Activated CD8-positive, alpha-beta T cell treated with anti-CD3 and anti-CD28 coated beads for 36 hours (primary cell): ENCODE measurements at regions of chr9 and their contacts with region 1.

Region 1: DNA sequence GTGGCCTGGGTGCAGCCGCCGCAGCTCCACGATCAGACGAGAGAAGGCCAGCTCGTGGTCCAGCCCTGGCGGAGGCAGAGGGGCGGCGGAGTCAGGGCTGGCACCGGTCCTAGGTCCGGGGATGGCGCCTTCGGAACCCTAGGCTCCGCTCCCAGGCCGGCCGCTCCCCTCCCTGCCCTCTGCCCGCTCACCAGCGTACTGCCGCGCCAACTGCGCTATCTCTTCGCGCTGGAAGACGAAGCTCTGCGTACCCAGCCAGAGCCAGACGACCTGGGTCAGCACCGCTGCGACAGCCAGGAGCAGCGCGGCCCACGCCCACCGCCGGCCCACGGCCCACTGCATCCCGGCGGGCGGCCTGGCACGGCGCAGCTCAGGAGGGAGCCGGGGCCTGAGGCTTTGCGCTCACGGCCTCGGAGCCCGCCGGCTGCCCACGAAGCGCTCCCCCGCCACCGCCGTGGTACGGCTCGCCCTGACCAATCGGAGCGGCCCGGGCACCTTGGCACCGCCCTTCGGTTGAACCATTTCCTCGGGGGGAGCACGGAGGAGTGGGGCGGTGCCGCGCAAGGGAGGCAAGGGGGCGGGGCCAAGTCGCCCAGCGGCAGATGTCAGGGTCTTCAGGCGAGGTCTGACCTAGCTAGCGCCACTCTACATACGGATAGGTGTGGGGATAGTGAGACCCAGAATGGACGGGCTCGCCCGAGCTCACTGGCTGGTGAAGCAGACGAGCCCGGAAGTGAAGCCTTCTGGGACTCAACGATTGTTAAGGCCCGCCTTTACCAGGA is at the start of gene SIGMAR1:
- DNase-seq: peak; percentile 92
- ATAC-seq: peak; percentile 95
- H3K4me3 Mint-ChIP-seq: peak within 1 kb of the TSS; percentile 94
- H3K27ac Mint-ChIP-seq: peak within 1 kb of the TSS; percentile 90
- H3K4me1 Mint-ChIP-seq: peaks cover 36% of the 10 kb centered on the region
- H3K27me3 Mint-ChIP-seq: no peaks in the 10 kb centered on the region
- CTCF ChIP-seq: no peak
- total RNA-seq, gene SIGMAR1: 80.7 to 81.2 TPM

Region 2: DNA sequence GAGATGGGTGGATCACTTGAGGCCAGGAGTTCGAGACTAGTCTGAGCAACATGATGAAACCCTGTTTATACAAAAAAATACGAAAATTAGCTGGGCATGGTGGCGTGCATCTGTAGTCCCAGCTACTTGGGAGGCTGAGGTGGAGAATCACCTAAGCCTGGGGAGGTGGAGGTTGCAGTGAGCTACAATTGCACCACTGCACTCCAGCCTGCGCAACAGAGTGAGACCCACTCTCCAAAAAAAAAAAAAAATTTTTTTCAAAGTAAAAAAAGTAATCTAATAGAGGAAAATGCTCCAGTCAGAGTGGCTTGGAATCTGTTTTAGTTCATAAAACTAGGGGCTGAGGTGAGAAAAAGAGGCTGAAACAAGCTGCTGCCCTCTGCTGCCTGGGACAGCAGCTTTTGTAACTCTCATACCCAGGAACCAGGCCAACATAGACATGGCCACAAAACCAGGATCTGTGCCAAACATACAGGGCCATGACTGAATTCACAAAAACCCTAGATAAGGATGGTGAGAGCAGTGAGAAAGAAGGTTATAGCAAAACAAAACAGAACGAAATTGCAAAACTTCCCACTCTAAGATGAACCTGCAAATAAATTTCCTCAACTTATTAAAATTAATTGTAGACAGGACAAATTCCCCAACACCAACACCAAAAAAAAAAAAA is 497.9 kb before region 1 on chr9:
- CTCF ChIA-PET with region 1: no interaction called
- POLR2A ChIA-PET with region 1: no interaction called
- intact Hi-C with region 1: no loop called
- DNase-seq: peak; percentile 4
- ATAC-seq: no peak
- H3K4me3 Mint-ChIP-seq: no peak overlapping the region
- H3K27ac Mint-ChIP-seq: no peak overlapping the region
- H3K4me1 Mint-ChIP-seq: peaks cover 2% of the 10 kb centered on the region
- H3K27me3 Mint-ChIP-seq: no peaks in the 10 kb centered on the region
- CTCF ChIP-seq: no peak

Region 3: GRCh38 chr9:34603610-34604231 is 33.8 kb before region 1 on chr9:
- CTCF ChIA-PET with region 1: interaction called, 38 read pairs
- POLR2A ChIA-PET with region 1: interaction called, 4 read pairs
- intact Hi-C with region 1: no loop called
- DNase-seq: peak; percentile 89
- ATAC-seq: peak; percentile 98
- H3K4me3 Mint-ChIP-seq: no peak overlapping the region
- H3K27ac Mint-ChIP-seq: no peak overlapping the region
- H3K4me1 Mint-ChIP-seq: no peaks in the 10 kb centered on the region
- H3K27me3 Mint-ChIP-seq: no peaks in the 10 kb centered on the region
- CTCF ChIP-seq: peak; percentile 82

Region 4: DNA sequence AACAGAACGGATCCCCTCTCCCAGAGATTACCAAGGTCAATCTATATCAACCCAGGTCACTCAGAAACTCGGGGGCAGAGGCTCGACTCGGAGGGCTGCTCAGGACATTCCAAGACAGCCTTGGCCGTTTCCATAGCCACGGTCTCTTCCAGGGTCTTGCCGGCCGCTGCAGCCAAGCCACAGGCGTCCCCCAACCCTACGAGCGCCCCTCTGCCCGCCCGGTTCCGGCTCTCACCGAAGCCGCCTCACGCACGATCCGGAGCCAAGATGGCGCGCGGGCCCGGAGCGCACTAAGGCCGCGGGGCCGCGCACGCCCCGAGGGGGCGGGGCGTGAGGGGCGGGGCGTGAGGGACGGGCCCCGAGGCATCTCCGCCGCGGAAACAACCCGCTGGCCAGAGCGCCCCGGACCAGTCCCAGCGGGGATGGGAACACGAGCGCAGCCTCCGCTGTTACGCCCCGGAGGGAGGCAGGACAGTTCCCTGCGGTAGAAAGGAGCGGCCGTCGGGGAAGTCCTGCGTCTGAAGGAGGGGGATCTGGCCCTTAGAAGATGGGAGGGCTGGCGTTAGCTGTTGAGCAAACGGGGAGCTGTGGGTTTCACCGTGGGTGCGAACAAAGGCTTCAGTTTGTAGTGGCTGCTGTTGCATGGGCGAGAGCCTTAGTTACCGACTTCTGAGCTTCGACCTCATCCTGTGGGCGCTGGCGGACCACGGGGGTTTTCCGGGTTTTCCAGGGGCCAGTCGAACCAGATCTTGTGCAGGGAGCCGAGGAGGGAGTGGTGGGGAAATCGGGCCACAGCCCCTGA is 25.5 kb before region 1 on chr9 and contains the start of gene RPP25L:
- CTCF ChIA-PET with region 1: interaction called, 142 read pairs
- POLR2A ChIA-PET with region 1: interaction called, 59 read pairs
- intact Hi-C with region 1: loop called (anchors 2 kb)
- DNase-seq: peak; percentile 86
- ATAC-seq: peak; percentile 97
- H3K4me3 Mint-ChIP-seq: peak within 1 kb of the TSS; percentile 87
- H3K27ac Mint-ChIP-seq: peak within 1 kb of the TSS; percentile 92
- H3K4me1 Mint-ChIP-seq: peaks cover 20% of the 10 kb centered on the region
- H3K27me3 Mint-ChIP-seq: no peaks in the 10 kb centered on the region
- CTCF ChIP-seq: no peak
- total RNA-seq, gene RPP25L: 37.9 to 38.7 TPM

Region 5: GRCh38 chr9:34620061-34620994 is 17.2 kb before region 1 on chr9 and contains the start of gene DCTN3:
- CTCF ChIA-PET with region 1: interaction called, 142 read pairs
- POLR2A ChIA-PET with region 1: interaction called, 59 read pairs
- intact Hi-C with region 1: no loop called
- DNase-seq: peak; percentile 97
- ATAC-seq: peak; percentile 99
- H3K4me3 Mint-ChIP-seq: peak within 1 kb of the TSS; percentile 91
- H3K27ac Mint-ChIP-seq: peak within 1 kb of the TSS; percentile 75
- H3K4me1 Mint-ChIP-seq: peaks cover 26% of the 10 kb centered on the region
- H3K27me3 Mint-ChIP-seq: peaks cover 17% of the 10 kb centered on the region
- CTCF ChIP-seq: no peak
- total RNA-seq, gene DCTN3: 52.7 to 61.0 TPM

Region 6: GRCh38 chr9:34659592-34660535 is 22.3 kb after region 1 on chr9:
- CTCF ChIA-PET with region 1: interaction called, 15 read pairs
- POLR2A ChIA-PET with region 1: interaction called, 12 read pairs
- intact Hi-C with region 1: no loop called
- DNase-seq: peak; percentile 26
- ATAC-seq: no peak
- H3K4me3 Mint-ChIP-seq: no peak overlapping the region
- H3K27ac Mint-ChIP-seq: no peak overlapping the region
- H3K4me1 Mint-ChIP-seq: peaks cover 22% of the 10 kb centered on the region
- H3K27me3 Mint-ChIP-seq: no peaks in the 10 kb centered on the region
- CTCF ChIP-seq: no peak

Region 7: DNA sequence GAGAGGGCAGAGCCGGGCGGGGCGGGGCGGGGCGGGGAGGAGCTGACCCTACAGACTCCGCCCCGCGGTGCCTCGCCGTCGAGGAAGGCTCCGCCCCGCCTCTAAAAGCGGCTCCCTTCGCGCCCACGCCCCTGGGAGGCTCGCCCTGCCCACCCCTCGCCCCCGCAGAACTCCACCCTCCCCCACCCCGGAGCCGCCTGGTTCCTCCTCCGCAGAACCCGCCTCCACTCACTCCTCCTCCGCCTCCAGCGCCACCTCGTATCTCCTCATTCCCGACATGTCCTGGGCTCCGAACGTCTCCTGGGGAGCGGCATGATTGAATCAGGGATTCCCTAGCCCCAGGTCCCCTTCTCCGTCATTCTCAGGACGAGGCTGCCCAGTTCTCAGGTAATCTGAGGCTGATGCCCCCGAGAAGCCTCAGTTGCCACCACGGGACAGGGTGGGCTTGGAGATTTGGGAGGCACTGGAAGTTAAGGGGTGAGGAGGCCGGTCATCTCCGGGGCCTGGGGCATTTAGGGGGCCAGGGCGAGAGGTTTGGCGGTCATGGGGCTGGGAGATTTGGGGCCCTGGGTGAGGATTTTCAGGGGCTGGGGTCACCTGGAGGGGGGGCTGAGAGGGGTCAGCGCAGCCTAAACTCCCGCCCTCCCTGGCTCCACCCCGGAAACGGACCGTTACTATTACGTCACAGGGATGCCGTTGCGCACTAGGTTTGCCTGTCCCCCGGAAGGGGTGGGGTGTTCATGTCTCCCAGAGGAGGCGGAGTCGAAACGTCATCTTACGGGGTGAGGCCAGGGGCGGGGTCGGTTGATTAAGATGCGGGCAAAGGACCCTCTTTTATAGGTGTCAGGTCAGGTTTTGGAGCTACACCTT is 28.1 kb after region 1 on chr9:
- CTCF ChIA-PET with region 1: interaction called, 15 read pairs
- POLR2A ChIA-PET with region 1: interaction called, 12 read pairs
- intact Hi-C with region 1: no loop called
- DNase-seq: peak; percentile 91
- ATAC-seq: peak; percentile 81
- H3K4me3 Mint-ChIP-seq: peak overlapping the region; percentile 79
- H3K27ac Mint-ChIP-seq: peak overlapping the region; percentile 85
- H3K4me1 Mint-ChIP-seq: peaks cover 22% of the 10 kb centered on the region
- H3K27me3 Mint-ChIP-seq: no peaks in the 10 kb centered on the region
- CTCF ChIP-seq: no peak